Breast epithelium (tissue), 4 donors: ENCODE measurements at regions of chr3 and their contacts with region 1.

Region 1: GRCh38 chr3:66392512-66392911 is 108.3 kb downstream of the LRIG1 start:
- DNase-seq: no peak
- H3K4me3 ChIP-seq: no peak overlapping the region
- H3K27ac ChIP-seq: peak overlapping the region in 1 of 2 donors; percentile 10
- H3K4me1 ChIP-seq: no peaks in the 10 kb centered on the region
- H3K27me3 ChIP-seq: no peaks in the 10 kb centered on the region
- CTCF ChIP-seq: no peak
- POLR2A ChIP-seq: no peak

Region 2: DNA sequence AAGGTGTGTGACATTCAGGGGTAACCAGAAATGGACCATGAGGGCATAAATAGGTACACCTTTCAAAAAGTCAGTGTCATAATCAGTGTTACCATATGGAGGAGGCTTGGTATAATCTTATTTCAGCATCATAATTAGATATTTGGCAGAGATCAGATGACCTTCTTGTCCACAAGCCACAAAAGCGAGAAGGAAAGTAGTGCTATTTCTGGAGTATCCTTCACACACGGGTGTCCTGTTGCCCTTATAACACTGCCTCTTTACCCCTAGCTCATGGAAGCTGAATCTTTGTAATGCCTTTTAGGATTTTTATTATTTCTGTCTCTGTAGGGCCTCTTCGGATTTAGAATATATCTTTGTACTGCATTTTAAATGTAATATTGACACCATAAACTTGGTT is 24.5 kb before region 1 on chr3:
- intact Hi-C with region 1: loop called (anchors 1 kb)
- DNase-seq: no peak
- H3K4me3 ChIP-seq: no peak overlapping the region
- H3K27ac ChIP-seq: no peak overlapping the region
- H3K4me1 ChIP-seq: no peaks in the 10 kb centered on the region
- H3K27me3 ChIP-seq: no peaks in the 10 kb centered on the region
- CTCF ChIP-seq: no peak
- POLR2A ChIP-seq: no peak

Region 3: GRCh38 chr3:66378256-66378823 is 14.2 kb before region 1 on chr3:
- intact Hi-C with region 1: no loop called
- DNase-seq: no peak
- H3K4me3 ChIP-seq: no peak overlapping the region
- H3K27ac ChIP-seq: no peak overlapping the region
- H3K4me1 ChIP-seq: no peaks in the 10 kb centered on the region
- H3K27me3 ChIP-seq: no peaks in the 10 kb centered on the region
- CTCF ChIP-seq: peak in 1 of 3 donors; percentile 31
- POLR2A ChIP-seq: no peak

Region 4: DNA sequence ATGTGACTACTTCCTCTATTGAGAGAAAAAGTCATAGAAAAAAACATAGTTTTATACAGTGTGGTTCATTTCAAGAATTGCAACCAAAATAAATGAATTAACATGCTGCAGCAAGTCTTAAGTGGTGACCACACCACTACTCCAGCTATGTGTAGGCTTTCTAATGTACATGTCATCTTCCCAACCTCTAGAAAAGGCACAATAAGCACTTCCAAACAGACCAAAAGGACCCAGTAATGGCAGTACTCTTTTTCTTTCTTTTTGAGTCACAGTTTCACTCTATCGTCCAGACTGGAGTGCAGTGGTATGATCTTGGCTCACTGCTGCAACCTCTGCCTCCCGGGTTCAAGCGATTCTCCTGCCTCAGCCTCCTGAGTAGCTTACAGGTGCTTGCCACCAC is 386.3 kb after region 1 on chr3:
- intact Hi-C with region 1: no loop called
- DNase-seq: no peak
- H3K4me3 ChIP-seq: no peak overlapping the region
- H3K27ac ChIP-seq: no peak overlapping the region
- H3K4me1 ChIP-seq: no peaks in the 10 kb centered on the region
- H3K27me3 ChIP-seq: no peaks in the 10 kb centered on the region
- CTCF ChIP-seq: no peak
- POLR2A ChIP-seq: no peak